ENCODE measurements at regions of chr9 and their contacts with region 1.

Region 1: DNA sequence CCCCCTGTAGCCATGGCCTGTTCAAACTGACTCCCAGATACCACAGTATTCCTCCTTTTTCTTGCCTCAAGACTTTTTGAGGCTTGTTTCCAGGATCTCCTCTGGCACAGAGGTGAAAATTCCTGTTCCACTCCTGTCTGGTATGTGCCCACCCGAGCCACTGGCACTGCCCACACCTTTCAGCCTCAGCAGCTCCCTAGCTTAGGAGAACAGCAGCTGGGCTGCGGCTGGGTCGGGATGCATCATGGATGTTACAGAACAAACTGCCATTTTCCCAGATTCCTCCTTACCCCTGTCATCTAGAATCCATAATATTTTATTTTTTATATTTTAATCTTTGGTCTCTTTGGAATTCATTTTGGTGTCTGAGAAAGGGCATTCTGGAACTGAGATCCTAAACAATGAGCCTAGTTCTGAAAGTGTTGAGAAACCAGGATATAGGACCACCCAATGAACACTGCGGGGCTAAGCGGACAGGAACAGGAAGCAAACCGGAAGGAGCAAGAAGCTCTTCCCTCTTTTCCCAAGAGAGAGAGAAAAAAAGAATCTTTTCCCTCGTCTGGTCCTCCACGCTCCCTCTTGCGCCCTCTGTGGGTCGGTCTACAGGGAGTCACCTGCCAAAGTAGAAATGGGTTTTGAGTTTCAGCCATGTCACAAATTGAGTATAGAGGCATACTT is 12.5 kb downstream of the OR2S2 start:
- DNase-seq: peak; percentile 26
- H3K4me3 ChIP-seq: no peak overlapping the region
- H3K27me3 ChIP-seq: no peaks in the 10 kb centered on the region
- CTCF ChIP-seq: peak; percentile 92

Region 2: GRCh38 chr9:35079426-35080341 is 865.8 kb before region 1 on chr9 and contains the start of gene FANCG:
- CTCF ChIA-PET with region 1: no interaction called
- POLR2A ChIA-PET with region 1: no interaction called
- DNase-seq: peak; percentile 70
- H3K4me3 ChIP-seq: peak within 1 kb of the TSS; percentile 65
- H3K27me3 ChIP-seq: no peaks in the 10 kb centered on the region
- CTCF ChIP-seq: no peak
- polyA plus RNA-seq, gene FANCG: 11.9 and 13.6 TPM in 2 replicates

Region 3: DNA sequence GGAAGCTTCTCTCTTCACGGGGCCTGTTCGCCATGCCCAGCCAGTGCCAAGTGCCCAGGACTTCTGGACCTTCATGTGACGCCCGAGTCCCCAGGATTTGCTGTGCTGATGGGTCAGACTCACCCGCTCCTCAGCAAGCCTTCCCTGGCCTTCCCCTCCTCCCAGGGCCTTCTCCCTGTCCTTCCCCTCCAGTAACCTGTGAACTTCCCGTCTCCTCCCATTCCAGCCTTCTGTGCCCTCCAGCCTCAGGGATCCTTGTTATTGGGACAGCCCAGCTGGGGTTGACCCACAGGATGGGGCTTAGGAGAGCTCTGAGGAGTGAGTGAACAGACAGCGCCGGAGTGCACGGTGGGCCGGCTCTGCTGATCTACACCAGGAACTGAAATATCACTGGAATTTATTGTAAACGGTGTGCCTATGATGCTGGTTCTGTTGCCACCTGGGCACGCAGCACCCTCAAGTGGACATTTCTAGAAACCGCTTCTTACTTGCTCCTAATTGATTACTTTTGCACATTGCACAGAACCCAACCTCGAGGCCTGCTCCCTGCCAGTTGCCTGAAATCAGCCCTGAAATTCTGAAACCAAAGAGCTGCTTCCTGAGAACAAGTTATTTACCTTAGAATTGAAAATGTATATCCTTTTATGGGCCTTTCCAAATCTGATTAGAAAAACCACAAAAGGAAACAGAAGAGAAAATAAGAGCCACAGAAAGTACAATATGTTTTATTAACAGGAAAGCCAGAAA is 34.7 kb before region 1 on chr9:
- CTCF ChIA-PET with region 1: interaction called, 170 read pairs
- POLR2A ChIA-PET with region 1: no interaction called
- DNase-seq: no peak
- H3K4me3 ChIP-seq: no peak overlapping the region
- H3K27me3 ChIP-seq: no peaks in the 10 kb centered on the region
- CTCF ChIP-seq: peak; percentile 64

Region 4: DNA sequence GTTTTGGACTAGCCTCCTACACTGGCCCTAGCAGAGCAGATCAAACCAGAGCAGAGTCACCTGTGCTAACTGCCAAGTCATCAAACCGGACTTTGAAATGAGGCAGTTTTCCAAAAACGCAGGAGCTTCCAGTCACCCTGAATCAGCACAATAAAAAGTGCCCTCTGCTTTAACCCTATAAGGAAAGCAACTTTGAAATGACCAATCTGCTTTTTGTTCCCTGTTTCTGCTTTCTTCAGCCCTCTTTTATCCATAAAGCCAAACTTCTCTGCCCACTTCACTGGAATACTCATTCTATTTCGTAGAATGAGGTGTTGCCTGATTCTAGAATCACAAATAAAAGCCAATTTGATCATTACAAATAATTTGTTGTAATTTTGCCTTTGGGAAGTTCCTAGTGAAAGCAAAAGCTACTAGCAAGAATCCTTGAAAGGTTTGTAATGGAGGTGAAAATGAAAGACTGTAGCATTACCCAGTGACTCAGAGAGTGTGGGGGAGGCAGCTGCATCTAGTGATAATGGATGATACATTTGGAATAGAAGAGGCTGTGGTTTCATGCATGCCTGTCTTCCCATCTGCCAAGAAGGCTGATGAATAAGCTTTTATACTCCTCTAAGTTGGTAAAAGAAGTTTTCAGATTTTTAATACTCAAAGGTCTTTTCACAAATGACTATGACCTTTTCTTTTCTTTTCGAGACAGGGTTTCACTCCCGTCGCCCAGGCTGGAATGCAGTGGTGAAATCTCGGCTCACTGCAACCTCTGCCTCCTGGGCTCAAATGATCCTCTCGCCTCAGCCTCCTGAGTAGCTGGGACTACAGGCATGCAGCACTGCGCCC is 21.3 kb before region 1 on chr9:
- CTCF ChIA-PET with region 1: interaction called, 22 read pairs
- POLR2A ChIA-PET with region 1: no interaction called
- DNase-seq: peak; percentile 82
- H3K4me3 ChIP-seq: no peak overlapping the region
- H3K27me3 ChIP-seq: no peaks in the 10 kb centered on the region
- CTCF ChIP-seq: no peak

Region 5: GRCh38 chr9:35962126-35962906 is 16.8 kb after region 1 on chr9:
- CTCF ChIA-PET with region 1: interaction called, 14 read pairs
- POLR2A ChIA-PET with region 1: interaction called, 4 read pairs
- DNase-seq: peak; percentile 28
- H3K4me3 ChIP-seq: peak overlapping the region; percentile 30
- H3K27me3 ChIP-seq: no peaks in the 10 kb centered on the region
- CTCF ChIP-seq: no peak

Region 6: GRCh38 chr9:36051317-36051716 is 105.8 kb after region 1 on chr9:
- CTCF ChIA-PET with region 1: no interaction called
- POLR2A ChIA-PET with region 1: no interaction called
- DNase-seq: no peak
- H3K4me3 ChIP-seq: no peak overlapping the region
- H3K27me3 ChIP-seq: no peaks in the 10 kb centered on the region
- CTCF ChIP-seq: no peak

Measured in BJ (cell line).